ENCODE measurements at regions of chr5 and their contacts with region 1.

Region 1: GRCh38 chr5:138077065-138077696 is 6.7 kb upstream of the WNT8A start:
- DNase-seq: peak in 2 of 3 donors; percentile 51 to 58
- ATAC-seq: peak; percentile 90 to 97 (median 92)
- H3K4me3 ChIP-seq: no peak overlapping the region
- H3K27ac ChIP-seq: no peak overlapping the region
- H3K4me1 ChIP-seq: no peaks in the 10 kb centered on the region
- H3K27me3 ChIP-seq: no peaks in the 10 kb centered on the region
- CTCF ChIP-seq: peak; percentile 81 to 88 (median 84)
- POLR2A ChIP-seq: no peak

Region 2: GRCh38 chr5:136992796-136993489 is 1084.2 kb before region 1 on chr5:
- intact Hi-C with region 1: no loop called
- DNase-seq: no peak
- ATAC-seq: no peak
- H3K4me3 ChIP-seq: no peak overlapping the region
- H3K27ac ChIP-seq: no peak overlapping the region
- H3K4me1 ChIP-seq: no peaks in the 10 kb centered on the region
- H3K27me3 ChIP-seq: no peaks in the 10 kb centered on the region
- CTCF ChIP-seq: no peak
- POLR2A ChIP-seq: no peak

Region 3: DNA sequence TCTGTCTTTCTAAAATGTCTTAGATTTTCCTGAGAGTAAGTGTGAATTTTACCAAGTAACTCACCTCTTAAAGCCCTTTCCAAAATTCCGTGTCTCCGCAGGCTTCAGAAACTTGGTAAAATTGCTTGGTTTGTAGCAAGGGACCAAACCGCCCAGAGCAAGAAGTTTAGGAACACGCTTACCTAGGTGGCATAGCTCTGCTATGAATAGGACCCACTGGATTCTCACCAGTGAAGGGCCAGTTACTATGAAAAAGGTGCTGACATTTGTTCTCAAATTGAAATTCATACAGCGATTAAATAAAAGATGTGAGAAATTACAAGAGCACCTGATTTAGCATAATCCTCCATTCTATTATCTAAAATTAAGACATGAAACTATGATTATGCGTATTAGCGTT is 55.4 kb after region 1 on chr5:
- intact Hi-C with region 1: loop called in 1 of 2 experiments (anchors 5 kb)
- DNase-seq: no peak
- ATAC-seq: no peak
- H3K4me3 ChIP-seq: no peak overlapping the region
- H3K27ac ChIP-seq: no peak overlapping the region
- H3K4me1 ChIP-seq: no peaks in the 10 kb centered on the region
- H3K27me3 ChIP-seq: no peaks in the 10 kb centered on the region
- CTCF ChIP-seq: no peak
- POLR2A ChIP-seq: no peak

Region 4: GRCh38 chr5:138316355-138316754 is 239.2 kb after region 1 on chr5:
- intact Hi-C with region 1: no loop called
- DNase-seq: no peak
- ATAC-seq: no peak
- H3K4me3 ChIP-seq: no peak overlapping the region
- H3K27ac ChIP-seq: no peak overlapping the region
- H3K4me1 ChIP-seq: no peaks in the 10 kb centered on the region
- H3K27me3 ChIP-seq: no peaks in the 10 kb centered on the region
- CTCF ChIP-seq: no peak
- POLR2A ChIP-seq: no peak

Measured in right lobe of liver (tissue), 6 donors.